ENCODE measurements at regions of chr10 and their contacts with region 1.

Region 1: DNA sequence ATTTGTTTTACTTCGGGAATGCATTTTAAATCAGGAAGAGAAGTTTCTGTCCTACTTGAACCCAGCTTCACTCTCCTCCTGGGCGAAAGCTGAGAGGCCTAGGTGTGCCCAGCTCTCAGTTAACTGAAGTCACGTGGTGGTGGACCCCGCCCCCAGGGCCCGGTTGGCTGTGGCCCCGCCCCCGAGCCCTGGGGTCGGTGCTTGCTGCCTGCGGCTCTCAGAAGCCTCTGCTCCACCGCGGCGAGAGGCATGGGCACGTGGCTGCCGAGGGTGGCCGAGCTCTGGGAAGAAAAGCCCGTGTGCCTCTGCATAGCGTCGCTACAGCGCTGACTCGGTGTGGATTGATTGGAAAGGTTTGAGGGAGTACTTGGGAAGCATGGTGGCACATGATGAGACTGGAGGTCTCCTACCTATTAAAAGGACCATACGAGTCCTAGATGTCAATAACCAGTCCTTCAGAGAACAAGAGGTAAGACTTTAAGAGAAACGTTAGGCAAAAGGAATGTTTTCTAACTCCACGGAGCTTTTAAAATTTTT is 34.1 kb downstream of the NET1 start:
- DNase-seq: peak; percentile 97 to 98
- H3K4me3 ChIP-seq: peak overlapping the region; percentile 66 to 76
- H3K27ac ChIP-seq: peak overlapping the region; percentile 76 to 80
- H3K4me1 ChIP-seq: peaks cover 0 to 61% (median 30%) of the 10 kb centered on the region in 4 donors
- H3K27me3 ChIP-seq: no peaks in the 10 kb centered on the region
- CTCF ChIP-seq: no peak

Region 2: DNA sequence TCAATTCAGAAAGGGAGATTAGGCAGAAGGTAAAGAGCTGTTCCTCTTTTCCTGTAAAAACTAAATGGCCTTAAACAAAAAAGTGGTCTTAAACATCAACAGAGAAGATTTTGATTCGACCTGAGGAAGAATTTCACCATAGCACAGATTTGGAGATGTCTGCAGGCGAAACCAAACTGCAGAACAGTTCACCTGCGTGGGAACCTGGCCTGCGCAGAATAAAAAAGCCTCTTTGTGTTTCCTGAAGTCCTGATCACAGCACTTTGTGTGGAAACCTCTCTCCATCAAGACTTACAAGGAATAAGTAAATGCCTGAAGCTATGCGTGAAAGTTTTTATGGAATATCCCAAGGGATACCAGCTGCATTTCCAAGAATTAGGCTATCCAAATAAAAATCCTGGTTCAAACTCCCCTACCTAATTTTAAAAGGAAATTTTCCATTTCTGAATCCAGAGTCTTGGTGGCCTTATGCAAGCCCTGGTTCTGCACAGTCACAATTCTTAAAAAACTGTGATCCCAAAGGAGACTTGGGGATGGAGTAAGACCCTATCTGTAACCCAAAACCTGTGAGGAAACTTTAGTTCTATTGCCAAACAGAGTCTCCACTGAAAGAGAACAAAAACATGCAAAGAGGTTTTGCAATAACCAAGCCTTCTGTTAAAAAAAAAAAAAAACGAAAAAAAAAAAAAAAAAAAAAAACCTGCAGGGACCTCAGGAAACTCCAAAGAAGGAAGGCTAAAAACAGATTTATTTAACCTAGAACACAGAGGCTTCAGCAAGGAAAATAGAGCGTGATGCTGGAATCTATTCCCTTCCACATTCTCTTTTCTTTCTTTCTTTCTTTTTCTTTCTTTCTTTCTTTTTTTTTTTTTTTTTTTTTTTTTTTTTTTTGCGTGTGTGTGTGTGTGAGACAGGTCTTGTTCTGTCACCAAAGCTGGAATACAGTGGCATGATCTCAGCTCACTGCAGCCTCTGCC is 88.7 kb after region 1 on chr10:
- intact Hi-C with region 1: loop called (anchors 5 kb)
- DNase-seq: peak; percentile 25 to 56
- H3K4me3 ChIP-seq: no peak overlapping the region
- H3K27ac ChIP-seq: peak overlapping the region; percentile 73 to 78
- H3K4me1 ChIP-seq: peaks cover 0 to 76% (median 46%) of the 10 kb centered on the region in 4 donors
- H3K27me3 ChIP-seq: no peaks in the 10 kb centered on the region
- CTCF ChIP-seq: no peak

Region 3: DNA sequence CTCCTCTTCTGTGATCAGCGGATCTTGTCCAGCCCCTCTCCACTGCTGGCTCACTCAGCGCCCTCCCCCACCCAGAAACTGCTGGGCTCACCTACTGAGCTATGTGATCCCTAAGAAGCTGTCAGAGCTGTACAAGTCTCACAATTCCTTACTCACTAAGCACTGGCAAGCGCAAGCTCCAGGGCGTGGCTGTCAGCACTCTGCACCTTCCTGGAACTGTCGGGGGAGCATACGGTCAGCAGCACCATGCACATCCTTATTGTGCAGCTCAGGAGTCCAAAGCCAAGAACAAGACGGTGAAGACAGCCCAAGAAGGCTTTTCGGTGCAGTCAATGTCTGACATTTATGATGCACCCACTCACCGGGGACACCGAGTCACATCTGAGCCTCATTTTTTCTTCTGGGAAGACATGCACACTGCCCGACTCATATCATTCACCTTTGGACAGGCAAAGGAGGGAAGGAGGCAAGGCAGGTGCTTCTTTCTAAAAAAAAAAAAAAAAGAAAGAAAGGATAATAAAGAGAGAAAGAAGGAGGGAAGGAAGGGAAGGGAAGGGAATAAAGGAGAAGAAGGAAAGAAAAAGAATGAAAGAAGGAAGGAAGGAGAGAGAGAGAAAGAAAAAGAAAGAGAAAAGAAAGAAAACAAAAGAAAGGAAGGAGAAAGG is 163.6 kb after region 1 on chr10:
- intact Hi-C with region 1: no loop called
- DNase-seq: no peak
- H3K4me3 ChIP-seq: no peak overlapping the region
- H3K27ac ChIP-seq: peak overlapping the region; percentile 88 to 89
- H3K4me1 ChIP-seq: peaks cover 0 to 78% (median 59%) of the 10 kb centered on the region in 4 donors
- H3K27me3 ChIP-seq: no peaks in the 10 kb centered on the region
- CTCF ChIP-seq: no peak

Region 4: DNA sequence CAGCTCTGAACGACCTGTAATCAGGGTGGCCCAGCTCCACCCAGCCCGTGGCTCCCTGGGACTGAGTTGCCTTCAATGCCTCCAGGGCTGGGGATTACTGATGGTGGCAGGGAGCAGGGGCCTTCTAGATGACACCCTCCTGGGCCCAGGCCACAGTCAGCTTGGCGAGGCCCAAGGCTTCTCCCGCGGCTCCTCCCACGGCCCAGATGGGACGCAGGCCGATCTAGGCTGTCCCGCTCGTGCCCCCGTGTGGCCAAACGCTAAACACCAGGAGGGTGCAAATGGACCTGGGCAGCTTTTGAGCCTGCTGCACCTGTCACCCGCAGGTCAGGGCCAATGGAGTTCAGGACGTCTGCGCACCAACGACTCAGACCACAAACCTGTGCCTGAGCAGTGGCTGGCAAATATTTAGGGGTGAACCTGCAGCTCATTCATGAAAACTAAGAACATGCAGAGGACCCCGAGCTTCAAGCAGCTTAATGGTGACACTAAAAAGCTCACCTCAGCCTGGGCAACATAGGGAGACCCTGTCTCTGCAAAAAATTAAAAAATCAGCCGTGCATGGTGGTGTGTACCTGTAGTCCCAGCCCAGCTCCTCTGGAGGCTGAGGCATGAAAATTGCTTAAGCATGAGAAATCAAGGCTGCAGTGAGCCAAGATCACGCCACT is 176.8 kb after region 1 on chr10:
- intact Hi-C with region 1: loop called (anchors 2 kb)
- DNase-seq: peak; percentile 89 to 94
- H3K4me3 ChIP-seq: no peak overlapping the region
- H3K27ac ChIP-seq: peak overlapping the region; percentile 88 to 89
- H3K4me1 ChIP-seq: peaks cover 0 to 79% (median 53%) of the 10 kb centered on the region in 4 donors
- H3K27me3 ChIP-seq: no peaks in the 10 kb centered on the region
- CTCF ChIP-seq: peak; percentile 90 to 93

Region 5: GRCh38 chr10:5684318-5684970 is 238.0 kb after region 1 on chr10 and contains the start of gene TASOR2:
- intact Hi-C with region 1: loop called (anchors 10 kb)
- DNase-seq: peak; percentile 94 to 98
- H3K4me3 ChIP-seq: peak within 1 kb of the TSS; percentile 92 to 93
- H3K27ac ChIP-seq: peak within 1 kb of the TSS; percentile 78 to 80
- H3K4me1 ChIP-seq: peaks cover 0 to 26% (median 12%) of the 10 kb centered on the region in 4 donors
- H3K27me3 ChIP-seq: no peaks in the 10 kb centered on the region
- CTCF ChIP-seq: no peak

Region 6: GRCh38 chr10:5813287-5814109 is 367.0 kb after region 1 on chr10 and contains the start of gene GDI2:
- intact Hi-C with region 1: loop called (anchors 10 kb)
- DNase-seq: peak; percentile 94 to 97
- H3K4me3 ChIP-seq: peak within 1 kb of the TSS; percentile 91 to 100
- H3K27ac ChIP-seq: peak within 1 kb of the TSS; percentile 96 to 99
- H3K4me1 ChIP-seq: peaks cover 0 to 46% (median 14%) of the 10 kb centered on the region in 4 donors
- H3K27me3 ChIP-seq: no peaks in the 10 kb centered on the region
- CTCF ChIP-seq: peak in 1 of 2 experiments; percentile 24

Region 7: DNA sequence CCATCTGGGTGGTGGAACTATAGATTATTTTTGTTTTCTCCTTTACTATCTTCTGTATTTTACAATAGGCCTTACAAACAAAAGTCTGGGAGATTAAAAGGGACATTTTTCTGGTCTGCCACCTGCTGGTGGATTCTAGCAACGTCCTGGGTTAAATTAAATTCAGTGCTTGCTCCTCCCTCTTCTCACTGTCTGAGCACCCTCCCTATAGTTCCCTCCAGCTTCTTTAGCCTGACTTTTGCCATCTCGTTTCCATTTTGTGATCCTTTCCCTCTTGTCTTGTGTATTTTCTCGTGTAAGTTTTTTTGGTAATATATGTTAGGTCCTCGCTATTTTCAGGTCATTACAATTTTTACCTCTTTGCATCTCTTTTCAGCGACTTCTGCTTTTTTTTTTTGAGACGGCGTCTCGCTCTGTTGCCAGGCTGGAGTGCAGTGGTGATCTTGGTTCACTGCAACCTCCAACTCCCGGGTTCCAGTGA is 427.1 kb after region 1 on chr10:
- intact Hi-C with region 1: loop called (anchors 5 kb)
- DNase-seq: peak; percentile 62 to 74
- H3K4me3 ChIP-seq: no peak overlapping the region
- H3K27ac ChIP-seq: no peak overlapping the region
- H3K4me1 ChIP-seq: no peaks in the 10 kb centered on the region
- H3K27me3 ChIP-seq: no peaks in the 10 kb centered on the region
- CTCF ChIP-seq: peak; percentile 70 to 73